ENCODE measurements at regions of chr17 and their contacts with region 1.

Region 1: GRCh38 chr17:2029911-2030778 is at the start of gene DPH1:
- DNase-seq: peak; percentile 94
- H3K4me3 ChIP-seq: peak within 1 kb of the TSS; percentile 98
- H3K27ac ChIP-seq: peak within 1 kb of the TSS; percentile 67
- H3K4me1 ChIP-seq: peaks cover 48% of the 10 kb centered on the region
- H3K27me3 ChIP-seq: no peaks in the 10 kb centered on the region
- CTCF ChIP-seq: no peak
- total RNA-seq, gene DPH1: 51.1 and 60.8 TPM in 2 replicates

Region 2: GRCh38 chr17:1829592-1830257 is 200.4 kb before region 1 on chr17 and contains the starts of genes RPA1 and SMYD4:
- CTCF ChIA-PET with region 1: no interaction called
- POLR2A ChIA-PET with region 1: no interaction called
- intact Hi-C with region 1: loop called (anchors 5 kb)
- DNase-seq: peak; percentile 94
- H3K4me3 ChIP-seq: peak within 1 kb of the TSS; percentile 93
- H3K27ac ChIP-seq: peak within 1 kb of the TSS; percentile 78
- H3K4me1 ChIP-seq: peaks cover 4% of the 10 kb centered on the region
- H3K27me3 ChIP-seq: no peaks in the 10 kb centered on the region
- CTCF ChIP-seq: no peak
- total RNA-seq, gene RPA1: 211 and 231 TPM in 2 replicates
- total RNA-seq, gene SMYD4: 28.1 and 31.6 TPM in 2 replicates

Region 3: GRCh38 chr17:1908699-1909309 is 121.3 kb before region 1 on chr17:
- CTCF ChIA-PET with region 1: interaction called, 20 read pairs
- POLR2A ChIA-PET with region 1: no interaction called
- intact Hi-C with region 1: loop called (anchors 1 kb)
- DNase-seq: peak; percentile 90
- H3K4me3 ChIP-seq: peak overlapping the region; percentile 44
- H3K27ac ChIP-seq: no peak overlapping the region
- H3K4me1 ChIP-seq: peaks cover 13% of the 10 kb centered on the region
- H3K27me3 ChIP-seq: no peaks in the 10 kb centered on the region
- CTCF ChIP-seq: peak; percentile 82

Region 4: DNA sequence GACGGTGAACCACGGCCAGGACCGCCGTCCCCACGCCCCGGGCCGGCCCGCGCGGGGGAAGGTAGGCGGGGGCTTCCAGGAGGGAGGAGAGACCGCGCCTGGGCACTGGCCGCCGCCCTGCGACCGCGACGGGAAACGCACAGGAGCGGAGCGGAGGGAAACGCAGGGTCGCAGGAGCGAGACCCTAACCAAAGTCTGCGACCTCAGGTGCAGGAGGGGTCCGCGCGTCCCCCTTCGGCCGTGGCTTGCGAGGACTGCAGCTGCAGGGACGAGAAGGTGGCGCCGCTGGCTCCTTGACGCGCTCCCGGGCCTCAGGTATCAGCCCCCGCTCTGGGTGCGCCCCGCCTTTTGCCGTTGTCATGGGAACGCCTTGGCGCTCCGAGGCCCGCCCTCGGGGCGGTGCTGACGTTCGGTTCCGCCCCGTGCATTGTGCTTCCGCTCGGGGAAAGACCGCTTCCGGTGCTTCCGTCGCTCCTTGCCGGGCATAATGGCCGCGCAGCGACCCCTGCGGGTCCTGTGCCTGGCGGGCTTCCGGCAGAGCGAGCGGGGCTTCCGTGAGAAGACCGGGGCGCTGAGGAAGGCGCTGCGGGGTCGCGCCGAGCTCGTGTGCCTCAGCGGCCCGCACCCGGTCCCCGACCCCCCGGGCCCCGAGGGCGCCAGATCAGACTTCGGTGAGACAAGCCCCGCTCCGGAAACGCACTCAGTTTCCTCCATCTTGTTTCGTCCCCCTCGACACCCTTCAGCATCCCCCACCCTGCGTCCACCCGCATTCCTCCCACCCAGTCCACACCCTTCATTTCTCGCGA is 11.6 kb after region 1 on chr17 and contains the start of gene OVCA2:
- CTCF ChIA-PET with region 1: no interaction called
- POLR2A ChIA-PET with region 1: interaction called, 14 read pairs
- intact Hi-C with region 1: no loop called
- DNase-seq: peak; percentile 97
- H3K4me3 ChIP-seq: peak within 1 kb of the TSS; percentile 73
- H3K27ac ChIP-seq: peak within 1 kb of the TSS; percentile 91
- H3K4me1 ChIP-seq: peaks cover 13% of the 10 kb centered on the region
- H3K27me3 ChIP-seq: no peaks in the 10 kb centered on the region
- CTCF ChIP-seq: peak; percentile 60
- total RNA-seq, gene OVCA2: 30.7 and 33.1 TPM in 2 replicates

Region 5: DNA sequence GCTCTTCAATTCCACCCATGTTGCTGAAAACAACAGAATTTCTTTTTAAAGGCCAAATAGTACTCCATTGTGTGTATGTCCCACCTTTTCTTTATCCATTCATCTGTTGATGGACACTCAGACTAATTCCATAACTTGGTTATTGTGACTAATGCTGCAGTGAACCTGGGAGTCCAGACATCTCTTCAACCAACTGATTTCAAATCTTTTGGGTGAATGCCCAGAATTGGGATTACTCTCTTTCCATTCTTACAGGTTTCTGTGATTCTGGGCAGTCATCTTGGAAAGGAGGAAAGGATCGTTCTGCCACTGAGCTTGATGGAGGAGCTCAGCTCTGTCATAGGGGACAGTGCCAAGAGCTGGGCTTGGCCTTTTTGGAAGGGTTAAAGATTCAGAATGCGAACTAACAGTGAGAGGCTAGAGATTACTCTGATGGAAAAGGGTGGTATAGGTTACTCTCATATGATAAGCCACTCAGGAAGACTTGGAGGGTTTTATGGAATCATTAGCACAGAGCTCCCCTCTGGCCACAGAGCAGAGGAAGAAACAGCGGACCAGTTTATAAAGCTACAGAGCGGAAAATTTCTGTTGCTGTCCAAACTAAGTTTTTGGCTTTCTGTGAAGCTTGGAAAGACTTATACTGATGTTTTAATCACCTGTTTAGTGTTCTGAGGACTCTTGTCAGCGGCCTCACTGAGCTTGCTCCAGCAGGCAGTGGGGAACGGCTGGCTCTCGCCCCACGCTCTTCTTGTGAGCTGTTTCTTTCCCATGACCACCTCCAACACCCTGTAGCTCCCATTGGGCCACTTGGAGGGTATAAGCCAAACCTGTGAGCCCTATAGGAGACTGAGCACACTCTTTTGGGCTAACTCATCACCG is 73.0 kb after region 1 on chr17:
- CTCF ChIA-PET with region 1: interaction called, 11 read pairs
- POLR2A ChIA-PET with region 1: no interaction called
- intact Hi-C with region 1: no loop called
- DNase-seq: peak; percentile 87
- H3K4me3 ChIP-seq: no peak overlapping the region
- H3K27ac ChIP-seq: peak overlapping the region; percentile 31
- H3K4me1 ChIP-seq: peaks cover 44% of the 10 kb centered on the region
- H3K27me3 ChIP-seq: no peaks in the 10 kb centered on the region
- CTCF ChIP-seq: no peak